WTC11 (cell line): ENCODE measurements at regions of chr12 and their contacts with region 1.

Region 1: DNA sequence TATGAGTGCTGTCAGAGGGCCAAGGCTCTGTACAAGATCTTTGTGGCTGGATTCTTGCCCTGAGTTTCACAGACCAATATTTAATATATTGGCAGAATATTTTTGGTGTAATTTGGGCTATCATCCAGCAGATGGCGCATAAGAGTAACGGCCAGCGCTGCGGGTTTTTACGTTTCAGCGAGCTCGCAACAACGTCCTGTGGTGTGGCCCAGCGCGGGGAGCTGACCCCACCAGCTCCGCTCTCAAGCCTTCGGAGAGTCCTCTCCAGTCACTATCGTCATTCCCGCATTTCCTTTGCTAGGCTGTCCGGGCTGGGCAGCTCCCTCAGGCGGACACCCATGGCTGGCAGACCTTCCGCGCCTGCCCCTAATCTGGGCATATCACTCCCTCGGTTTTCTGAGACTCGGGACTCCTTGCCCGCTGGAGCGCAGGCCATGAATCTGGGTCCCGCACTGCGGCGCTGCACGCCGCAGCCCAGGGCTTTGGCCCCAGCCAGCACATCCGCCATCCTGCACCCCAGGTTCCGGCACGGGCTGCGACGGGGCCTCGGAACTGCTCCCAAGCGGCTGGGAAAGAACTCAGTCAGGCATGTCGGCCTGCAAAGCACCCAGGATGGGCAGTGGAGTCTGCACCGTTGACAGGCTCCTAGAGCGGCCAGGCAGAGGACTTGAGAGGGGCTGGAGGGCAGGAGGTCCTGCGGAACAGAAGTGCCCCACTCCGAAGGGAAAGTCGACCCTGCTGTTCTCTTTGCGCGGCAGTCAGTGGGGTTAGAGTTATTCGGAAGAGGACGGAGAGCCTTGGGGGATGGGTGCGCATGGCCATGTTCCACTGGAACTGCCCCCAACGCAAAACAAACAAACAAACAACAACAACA is 18.4 kb downstream of the OLR1 start:
- DNase-seq: peak; percentile 73
- ATAC-seq: peak; percentile 91
- H3K4me3 Mint-ChIP-seq: peak overlapping the region; percentile 81
- H3K27ac Mint-ChIP-seq: peak overlapping the region; percentile 90
- H3K4me1 Mint-ChIP-seq: peaks cover 7% of the 10 kb centered on the region
- H3K27me3 Mint-ChIP-seq: no peaks in the 10 kb centered on the region; the same call in 1 of the 2 replicates
- CTCF ChIP-seq: peak; percentile 84

Region 2: DNA sequence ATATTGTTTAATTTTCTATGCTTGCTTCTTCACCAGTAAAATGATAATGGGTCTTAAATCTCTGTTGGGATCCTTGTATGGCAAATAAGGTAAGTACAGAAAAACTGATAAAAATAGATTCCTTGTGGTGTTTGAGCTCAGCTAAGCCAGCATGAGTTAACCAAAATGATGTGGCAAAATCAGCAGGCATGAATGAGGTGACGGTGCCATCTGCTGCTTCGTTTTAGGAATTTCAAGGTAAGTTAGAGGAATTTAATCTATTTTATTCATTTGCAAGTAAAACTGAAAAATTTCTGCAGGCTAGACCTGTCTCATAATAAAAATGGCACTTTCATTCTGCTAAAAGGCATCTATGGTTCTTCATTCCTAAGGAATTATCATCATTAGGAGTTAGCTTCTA is 13.5 kb before region 1 on chr12:
- CTCF ChIA-PET with region 1: interaction called, 18 read pairs
- POLR2A ChIA-PET with region 1: no interaction called
- DNase-seq: peak; percentile 42
- ATAC-seq: peak; percentile 50; the same call in 1 of the 2 replicates
- H3K4me3 Mint-ChIP-seq: no peak overlapping the region
- H3K27ac Mint-ChIP-seq: no peak overlapping the region
- H3K4me1 Mint-ChIP-seq: peaks cover 5% of the 10 kb centered on the region
- H3K27me3 Mint-ChIP-seq: no peaks in the 10 kb centered on the region
- CTCF ChIP-seq: peak; percentile 37; the same call in 1 of the 2 replicates

Region 3: DNA sequence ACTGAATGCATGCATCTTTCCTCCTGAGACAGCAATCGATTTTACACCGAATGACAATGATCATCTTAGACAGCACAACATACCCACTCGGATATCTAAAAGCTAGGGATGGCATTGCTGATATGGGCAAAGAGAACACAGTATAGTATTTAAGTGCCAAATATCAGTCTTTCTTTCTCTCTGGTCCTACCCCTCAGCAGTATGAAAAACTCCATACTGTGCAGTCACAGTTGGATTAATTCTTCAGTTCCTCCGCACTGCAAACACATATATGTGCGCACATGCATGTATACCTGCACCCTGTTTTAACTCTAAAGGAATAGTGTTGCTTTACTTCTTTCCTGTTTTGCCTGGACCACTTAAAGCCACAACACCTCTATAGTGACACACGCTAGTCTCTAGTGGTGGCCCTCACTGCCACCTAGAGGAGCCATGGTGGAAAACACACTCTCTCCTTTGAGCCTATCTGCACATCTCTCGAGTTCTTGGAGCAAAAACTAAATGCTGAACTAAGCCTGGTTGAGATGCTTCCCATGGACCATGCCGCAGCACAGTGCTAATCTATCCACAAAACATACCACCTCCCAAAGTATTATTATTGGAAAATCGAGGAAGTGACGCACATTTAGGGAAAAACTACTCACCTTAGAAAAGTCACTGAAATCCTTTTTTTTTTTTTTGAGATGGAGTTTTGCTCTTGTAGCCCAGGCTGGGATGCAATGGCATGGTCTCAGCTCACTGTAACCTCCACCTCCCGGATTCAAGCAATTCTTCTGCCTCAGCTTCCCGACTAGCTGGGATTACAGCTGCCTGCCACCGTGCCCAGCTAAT is 37.3 kb after region 1 on chr12:
- CTCF ChIA-PET with region 1: interaction called, 25 read pairs
- POLR2A ChIA-PET with region 1: interaction called, 3 read pairs
- DNase-seq: peak; percentile 48
- ATAC-seq: peak; percentile 98
- H3K4me3 Mint-ChIP-seq: no peak overlapping the region
- H3K27ac Mint-ChIP-seq: no peak overlapping the region
- H3K4me1 Mint-ChIP-seq: peaks cover 20% of the 10 kb centered on the region
- H3K27me3 Mint-ChIP-seq: peaks cover 4% of the 10 kb centered on the region; the same call in 1 of the 2 replicates
- CTCF ChIP-seq: no peak; the same call in 1 of the 2 replicates

Region 4: GRCh38 chr12:10212201-10213131 is 59.0 kb after region 1 on chr12 and contains the start of gene GABARAPL1:
- CTCF ChIA-PET with region 1: interaction called, 9 read pairs
- POLR2A ChIA-PET with region 1: interaction called, 12 read pairs
- DNase-seq: peak; percentile 91
- ATAC-seq: peak; percentile 88
- H3K4me3 Mint-ChIP-seq: peak within 1 kb of the TSS; percentile 92
- H3K27ac Mint-ChIP-seq: peak within 1 kb of the TSS; percentile 99
- H3K4me1 Mint-ChIP-seq: peaks cover 27% of the 10 kb centered on the region
- H3K27me3 Mint-ChIP-seq: no peaks in the 10 kb centered on the region; the same call in 1 of the 2 replicates
- CTCF ChIP-seq: no peak
- total RNA-seq, gene GABARAPL1: 85.2 to 90.3 TPM (median 87.8 TPM) in 3 replicates

Region 5: GRCh38 chr12:10867381-10867780 is 713.9 kb after region 1 on chr12:
- CTCF ChIA-PET with region 1: no interaction called
- POLR2A ChIA-PET with region 1: no interaction called
- DNase-seq: no peak
- ATAC-seq: no peak
- H3K4me3 Mint-ChIP-seq: no peak overlapping the region
- H3K27ac Mint-ChIP-seq: no peak overlapping the region
- H3K4me1 Mint-ChIP-seq: no peaks in the 10 kb centered on the region
- H3K27me3 Mint-ChIP-seq: no peaks in the 10 kb centered on the region
- CTCF ChIP-seq: no peak